ENCODE measurements at regions of chr2 and their contacts with region 1.

Region 1: DNA sequence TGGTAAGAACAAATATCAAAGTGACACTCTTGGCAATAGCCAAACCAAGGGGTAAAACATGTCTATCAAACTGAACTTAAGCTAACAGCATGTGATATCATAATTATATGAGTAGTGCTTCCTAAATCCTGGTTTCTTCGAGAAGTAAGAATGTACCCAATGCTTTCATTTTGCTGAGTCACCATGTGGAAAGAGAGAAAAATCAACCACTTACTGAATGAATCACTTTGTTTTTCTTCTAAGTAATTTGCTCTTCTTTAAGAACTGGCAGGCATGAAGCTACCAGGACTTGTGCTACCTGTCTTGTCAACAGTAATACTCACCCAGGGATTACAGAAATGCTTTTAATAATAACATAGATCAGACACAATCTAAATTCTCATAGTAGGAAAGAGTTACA is 19.0 kb upstream of the DUSP19 start:
- DNase-seq: peak; percentile 89
- ATAC-seq: peak; percentile 86
- H3K4me3 ChIP-seq: no peak overlapping the region
- H3K27ac ChIP-seq: no peak overlapping the region
- H3K4me1 ChIP-seq: no peaks in the 10 kb centered on the region
- H3K27me3 ChIP-seq: no peaks in the 10 kb centered on the region
- CTCF ChIP-seq: no peak
- POLR2A ChIP-seq: no peak
- RAD21 ChIP-seq: no peak

Region 2: DNA sequence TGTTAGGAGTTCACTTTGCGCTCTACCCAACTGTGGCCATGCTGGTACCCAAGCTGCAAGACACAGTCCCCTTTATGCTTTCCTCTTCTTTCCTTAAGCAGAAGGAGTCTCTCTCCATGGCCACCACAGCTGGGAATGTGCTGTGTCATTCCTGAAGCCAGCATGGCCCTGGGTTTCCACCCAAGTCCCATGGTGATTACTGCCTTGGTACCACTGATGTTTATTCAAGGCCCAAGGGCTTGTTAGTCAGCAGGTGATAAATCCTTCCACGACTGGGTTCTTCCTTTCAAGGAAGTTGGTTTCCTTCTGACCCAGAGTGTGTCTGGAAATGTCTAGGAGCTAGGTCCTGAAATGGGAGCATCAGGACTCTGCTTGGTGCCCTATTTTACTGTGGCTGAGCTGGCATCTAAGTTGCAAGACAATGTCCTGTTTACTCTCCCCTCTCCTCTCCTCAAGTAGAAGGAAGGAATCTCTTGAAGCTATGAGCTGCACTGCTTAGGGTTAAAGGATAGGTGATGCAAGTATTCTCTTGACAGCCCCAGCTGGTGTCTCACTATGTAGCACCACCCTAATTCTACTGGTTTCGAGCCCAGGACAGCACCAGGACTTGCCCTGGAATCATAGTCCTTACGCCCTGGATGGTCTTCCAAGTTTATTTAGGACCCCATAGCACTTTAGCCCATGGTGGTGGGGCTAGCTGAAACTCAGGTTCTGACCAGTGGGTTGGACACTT is 46.0 kb after region 1 on chr2:
- CTCF ChIA-PET with region 1: no interaction called
- POLR2A ChIA-PET with region 1: interaction called, 12 read pairs
- dilution Hi-C with region 1: no loop called
- in situ Hi-C with region 1: no loop called
- intact Hi-C with region 1: no loop called
- DNase-seq: peak; percentile 47
- ATAC-seq: peak; percentile 44
- H3K4me3 ChIP-seq: no peak overlapping the region
- H3K27ac ChIP-seq: no peak overlapping the region
- H3K4me1 ChIP-seq: peaks cover 2% of the 10 kb centered on the region
- H3K27me3 ChIP-seq: no peaks in the 10 kb centered on the region
- CTCF ChIP-seq: no peak
- POLR2A ChIP-seq: no peak
- RAD21 ChIP-seq: no peak

Region 3: DNA sequence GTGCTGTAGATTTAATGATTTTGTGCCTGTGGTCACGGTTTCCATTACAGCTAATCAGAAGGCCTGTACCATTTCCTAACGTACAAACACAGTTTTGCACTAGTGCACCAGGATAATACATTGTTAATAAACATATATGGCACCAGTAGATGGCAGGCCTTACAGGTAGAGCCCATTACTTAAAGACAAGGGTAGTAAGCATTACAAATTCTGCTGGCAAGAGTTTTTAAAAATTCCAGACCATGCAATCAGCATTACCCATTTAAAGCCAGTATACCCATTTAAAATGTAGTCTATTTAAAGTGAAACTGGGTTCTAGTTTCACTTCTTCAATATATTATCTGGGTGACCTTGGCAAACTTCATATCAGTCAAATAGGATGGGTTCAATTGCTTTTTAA is 288.9 kb after region 1 on chr2:
- CTCF ChIA-PET with region 1: no interaction called
- POLR2A ChIA-PET with region 1: no interaction called
- dilution Hi-C with region 1: no loop called
- in situ Hi-C with region 1: no loop called
- intact Hi-C with region 1: no loop called
- DNase-seq: no peak
- ATAC-seq: no peak
- H3K4me3 ChIP-seq: no peak overlapping the region
- H3K27ac ChIP-seq: no peak overlapping the region
- H3K4me1 ChIP-seq: no peaks in the 10 kb centered on the region
- H3K27me3 ChIP-seq: no peaks in the 10 kb centered on the region
- CTCF ChIP-seq: no peak
- POLR2A ChIP-seq: no peak
- RAD21 ChIP-seq: no peak

Measured in IMR-90 (cell line).